A549 (cell line): ENCODE measurements at regions of chr16 and their contacts with region 1.

Region 1: GRCh38 chr16:21593530-21594289 is 5.7 kb upstream of the METTL9 start:
- DNase-seq: no peak
- ATAC-seq: no peak
- H3K4me3 ChIP-seq: no peak overlapping the region
- H3K27ac ChIP-seq: no peak overlapping the region
- H3K4me1 ChIP-seq: peaks cover 5% of the 10 kb centered on the region
- CTCF ChIP-seq: no peak
- EP300 ChIP-seq: no peak
- POLR2A ChIP-seq: no peak
- RAD21 ChIP-seq: no peak

Region 2: GRCh38 chr16:21523411-21524067 is 70.2 kb before region 1 on chr16:
- CTCF ChIA-PET with region 1: no interaction called
- POLR2A ChIA-PET with region 1: interaction called, 13 read pairs
- DNase-seq: no peak
- ATAC-seq: no peak
- H3K4me3 ChIP-seq: no peak overlapping the region
- H3K27ac ChIP-seq: peak overlapping the region in 1 of 2 experiments; percentile 68; a peak in 3 of 6 replicates
- H3K4me1 ChIP-seq: peaks cover 10% of the 10 kb centered on the region
- CTCF ChIP-seq: no peak
- EP300 ChIP-seq: no peak
- POLR2A ChIP-seq: no peak
- RAD21 ChIP-seq: no peak

Region 3: GRCh38 chr16:21646721-21647561 is 53.2 kb after region 1 on chr16:
- CTCF ChIA-PET with region 1: no interaction called
- POLR2A ChIA-PET with region 1: no interaction called
- DNase-seq: no peak
- ATAC-seq: no peak
- H3K4me3 ChIP-seq: no peak overlapping the region
- H3K27ac ChIP-seq: no peak overlapping the region
- H3K4me1 ChIP-seq: no peaks in the 10 kb centered on the region
- CTCF ChIP-seq: no peak
- EP300 ChIP-seq: no peak
- POLR2A ChIP-seq: no peak
- RAD21 ChIP-seq: no peak

Region 4: GRCh38 chr16:21727344-21727743 is 133.6 kb after region 1 on chr16:
- CTCF ChIA-PET with region 1: no interaction called
- POLR2A ChIA-PET with region 1: no interaction called
- DNase-seq: no peak
- ATAC-seq: no peak
- H3K4me3 ChIP-seq: no peak overlapping the region
- H3K27ac ChIP-seq: no peak overlapping the region
- H3K4me1 ChIP-seq: no peaks in the 10 kb centered on the region
- CTCF ChIP-seq: no peak
- EP300 ChIP-seq: no peak
- POLR2A ChIP-seq: no peak
- RAD21 ChIP-seq: no peak

Region 5: GRCh38 chr16:22109258-22109898 is 515.7 kb after region 1 on chr16:
- CTCF ChIA-PET with region 1: no interaction called
- POLR2A ChIA-PET with region 1: no interaction called
- DNase-seq: no peak
- ATAC-seq: no peak
- H3K4me3 ChIP-seq: no peak overlapping the region
- H3K27ac ChIP-seq: no peak overlapping the region
- H3K4me1 ChIP-seq: no peaks in the 10 kb centered on the region
- CTCF ChIP-seq: no peak
- EP300 ChIP-seq: no peak
- POLR2A ChIP-seq: no peak
- RAD21 ChIP-seq: no peak